Uterus (tissue), 4 donors: ENCODE measurements at regions of chr3 and their contacts with region 1.

Region 1: GRCh38 chr3:41881233-41881821 is 80.6 kb downstream of the ULK4 start:
- DNase-seq: peak in 1 of 2 donors; percentile 19
- H3K4me3 ChIP-seq: no peak overlapping the region
- H3K27ac ChIP-seq: no peak overlapping the region
- H3K4me1 ChIP-seq: no peaks in the 10 kb centered on the region
- H3K27me3 ChIP-seq: no peaks in the 10 kb centered on the region
- CTCF ChIP-seq: peak; percentile 68 to 84 (median 76)
- POLR2A ChIP-seq: no peak

Region 2: DNA sequence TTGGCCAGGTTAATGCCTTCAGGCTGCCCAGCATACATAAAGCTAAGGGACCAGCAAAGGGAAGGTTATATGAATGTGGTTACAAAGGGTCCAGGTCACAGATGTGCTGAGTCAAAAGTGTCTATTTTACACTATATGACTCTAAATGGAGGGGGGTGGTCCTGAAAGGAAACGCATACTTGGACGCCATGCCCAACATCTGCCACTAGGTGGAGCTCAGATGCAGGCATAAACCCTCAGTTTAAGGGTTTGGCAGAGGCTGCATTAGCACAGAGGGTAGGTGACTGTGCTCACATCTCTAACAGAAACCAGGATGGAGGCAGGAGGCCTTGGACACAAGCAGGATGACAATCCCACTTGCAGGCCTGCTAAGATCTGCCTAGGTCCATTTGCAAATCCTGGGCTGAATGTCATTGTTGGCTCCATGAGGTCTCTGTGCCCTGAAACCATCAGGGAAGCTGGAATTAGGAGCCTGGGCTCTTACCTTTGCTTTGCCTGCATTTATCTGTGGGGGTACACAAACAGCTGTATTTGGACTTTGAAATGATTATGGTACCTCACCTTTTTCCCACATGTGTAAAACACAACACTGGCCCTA is 1300.7 kb before region 1 on chr3:
- intact Hi-C with region 1: loop called (anchors 5 kb)
- DNase-seq: peak; percentile 65 to 67
- H3K4me3 ChIP-seq: no peak overlapping the region
- H3K27ac ChIP-seq: no peak overlapping the region
- H3K4me1 ChIP-seq: no peaks in the 10 kb centered on the region
- H3K27me3 ChIP-seq: no peaks in the 10 kb centered on the region
- CTCF ChIP-seq: peak; percentile 82 to 92 (median 86)
- POLR2A ChIP-seq: no peak

Region 3: GRCh38 chr3:42090973-42091731 is 209.8 kb after region 1 on chr3 and contains the start of gene TRAK1:
- intact Hi-C with region 1: no loop called
- DNase-seq: peak in 1 of 2 donors; percentile 42
- H3K4me3 ChIP-seq: no peak within 1 kb of the TSS
- H3K27ac ChIP-seq: peak within 1 kb of the TSS in 1 of 2 donors; percentile 22
- H3K4me1 ChIP-seq: no peaks in the 10 kb centered on the region
- H3K27me3 ChIP-seq: no peaks in the 10 kb centered on the region
- CTCF ChIP-seq: no peak
- POLR2A ChIP-seq: no peak
- total RNA-seq, gene TRAK1: 14.3 to 37.5 (median 21.4) TPM

Region 4: DNA sequence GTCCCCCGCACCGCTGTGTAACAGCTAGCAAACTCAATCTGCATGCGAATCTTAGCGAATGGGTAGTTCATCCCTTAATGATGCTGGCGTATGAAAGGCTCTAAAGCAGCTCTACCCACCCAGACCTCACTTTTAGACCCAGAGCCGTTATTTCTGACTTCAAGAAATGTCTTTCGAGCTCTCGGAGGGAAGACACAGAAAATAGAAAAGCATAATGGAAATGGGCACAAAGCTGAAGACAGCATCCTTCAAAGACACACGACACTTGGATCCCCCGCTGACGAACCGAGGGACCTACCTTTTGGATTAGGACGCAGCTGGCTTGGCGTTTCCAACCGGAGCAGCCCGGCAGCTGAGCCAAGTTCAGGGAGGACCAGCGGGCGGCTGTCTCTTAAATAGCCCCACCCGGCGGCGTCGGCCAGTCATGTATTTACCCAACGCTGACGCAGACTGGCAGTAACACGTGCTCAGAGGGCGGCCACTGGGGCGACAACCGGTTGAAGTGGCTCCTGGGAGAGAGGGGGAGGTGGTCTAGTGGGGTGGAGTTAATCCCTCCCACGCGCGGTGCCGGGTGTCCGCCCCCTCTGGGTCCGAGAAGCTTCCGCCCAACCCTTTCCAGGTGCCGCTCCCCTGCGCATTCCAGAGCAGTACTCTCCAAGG is 383.2 kb after region 1 on chr3:
- intact Hi-C with region 1: no loop called
- DNase-seq: no peak
- H3K4me3 ChIP-seq: no peak overlapping the region
- H3K27ac ChIP-seq: no peak overlapping the region
- H3K4me1 ChIP-seq: peaks cover 0 to 12% of the 10 kb centered on the region in 2 donors
- H3K27me3 ChIP-seq: peaks cover 0 to 30% of the 10 kb centered on the region in 2 donors
- CTCF ChIP-seq: no peak
- POLR2A ChIP-seq: no peak

Region 5: GRCh38 chr3:42502429-42503250 is 621.3 kb after region 1 on chr3 and contains the start of gene VIPR1:
- intact Hi-C with region 1: no loop called
- DNase-seq: peak; percentile 26 to 42
- H3K4me3 ChIP-seq: peak within 1 kb of the TSS; percentile 16 to 29
- H3K27ac ChIP-seq: no peak within 1 kb of the TSS
- H3K4me1 ChIP-seq: peaks cover 0 to 14% of the 10 kb centered on the region in 2 donors
- H3K27me3 ChIP-seq: peaks cover 0 to 12% of the 10 kb centered on the region in 2 donors
- CTCF ChIP-seq: no peak
- POLR2A ChIP-seq: peak in 1 of 2 donors; percentile 24
- total RNA-seq, gene VIPR1: 0.26 to 1.5 (median 0.99) TPM